Activated T-helper 2 cell treated with anti-CD3 and anti-CD28 coated beads, Interferon-gamma antibody, Interleukin-2, Interleukin-4, amounts not matched to agents 10 μg/mL and 5 μg/mL and 100 μg/mL, durations not matched to agents 14 hours and 24 hours and 36 hours (primary cell): ENCODE measurements at regions of chr4 and their contacts with region 1.

Region 1: DNA sequence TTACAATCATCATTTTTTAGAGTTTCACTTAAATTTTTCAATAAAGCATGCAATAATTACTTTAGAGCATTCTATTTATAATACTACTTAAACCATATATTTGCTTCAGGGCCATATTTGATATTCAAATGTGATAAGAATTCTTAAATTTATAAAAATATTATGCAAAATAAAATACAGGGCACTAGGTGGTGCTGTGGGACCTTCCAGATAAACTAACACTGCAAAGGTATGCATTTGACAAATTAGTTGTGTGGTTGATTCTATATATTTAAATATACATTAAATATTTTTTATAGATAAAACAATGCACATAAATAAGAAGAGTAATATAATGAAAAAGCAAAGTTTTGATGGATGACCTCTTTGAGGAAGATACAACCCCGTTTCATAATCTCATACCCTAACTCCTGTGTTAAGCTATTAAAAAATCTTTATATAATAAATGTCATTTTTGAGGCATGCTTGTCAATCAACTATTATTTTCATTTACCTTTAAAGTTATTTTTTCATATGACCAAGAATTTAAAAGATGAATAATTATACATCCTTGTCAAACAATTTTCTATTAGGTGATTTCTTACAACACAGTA is 128.4 kb downstream of the REELD1 start:
- DNase-seq: no peak
- H3K4me3 Mint-ChIP-seq: no peak overlapping the region
- H3K27ac Mint-ChIP-seq: no peak overlapping the region
- H3K4me1 Mint-ChIP-seq: peaks cover 7% of the 10 kb centered on the region
- H3K27me3 Mint-ChIP-seq: no peaks in the 10 kb centered on the region

Region 2: GRCh38 chr4:146458594-146458993 is 115.9 kb after region 1 on chr4:
- intact Hi-C with region 1: loop called (anchors 2 kb)
- DNase-seq: no peak
- H3K4me3 Mint-ChIP-seq: peak overlapping the region; percentile 65
- H3K27ac Mint-ChIP-seq: peak overlapping the region; percentile 86
- H3K4me1 Mint-ChIP-seq: peaks cover 29% of the 10 kb centered on the region
- H3K27me3 Mint-ChIP-seq: no peaks in the 10 kb centered on the region

Region 3: DNA sequence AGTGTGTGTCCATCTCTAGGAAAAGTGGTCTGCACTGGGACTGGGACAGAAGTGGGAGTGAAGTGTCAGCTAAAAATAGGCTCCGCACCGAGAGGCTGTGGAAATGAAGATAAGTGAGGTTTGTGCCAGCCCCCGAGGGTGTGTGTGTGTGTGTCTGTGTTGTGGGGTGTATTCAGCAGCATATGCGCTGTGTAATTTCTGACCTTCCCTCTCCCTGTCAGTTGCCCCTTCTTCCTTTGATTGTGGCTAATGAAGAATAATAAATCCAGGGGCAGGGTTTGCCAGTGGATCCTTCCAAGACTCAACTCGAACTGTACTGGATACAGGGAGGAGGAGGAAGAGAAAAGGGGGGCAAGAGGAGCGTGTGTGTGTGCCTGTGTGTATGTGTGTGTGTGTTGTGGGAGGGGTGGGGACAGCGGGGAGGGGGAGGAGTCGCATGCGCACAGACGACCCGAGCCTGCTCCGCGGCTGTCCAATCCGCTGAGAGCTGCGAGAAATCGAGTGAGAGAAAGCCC is 295.0 kb after region 1 on chr4:
- intact Hi-C with region 1: loop called (anchors 2 kb)
- DNase-seq: no peak
- H3K4me3 Mint-ChIP-seq: no peak overlapping the region
- H3K27ac Mint-ChIP-seq: no peak overlapping the region
- H3K4me1 Mint-ChIP-seq: no peaks in the 10 kb centered on the region
- H3K27me3 Mint-ChIP-seq: peaks cover 86% of the 10 kb centered on the region

Region 4: GRCh38 chr4:146916479-146917076 is 573.9 kb after region 1 on chr4:
- intact Hi-C with region 1: loop called (anchors 1 kb)
- DNase-seq: no peak
- H3K4me3 Mint-ChIP-seq: no peak overlapping the region
- H3K27ac Mint-ChIP-seq: no peak overlapping the region
- H3K4me1 Mint-ChIP-seq: no peaks in the 10 kb centered on the region
- H3K27me3 Mint-ChIP-seq: peaks cover 9% of the 10 kb centered on the region

Region 5: DNA sequence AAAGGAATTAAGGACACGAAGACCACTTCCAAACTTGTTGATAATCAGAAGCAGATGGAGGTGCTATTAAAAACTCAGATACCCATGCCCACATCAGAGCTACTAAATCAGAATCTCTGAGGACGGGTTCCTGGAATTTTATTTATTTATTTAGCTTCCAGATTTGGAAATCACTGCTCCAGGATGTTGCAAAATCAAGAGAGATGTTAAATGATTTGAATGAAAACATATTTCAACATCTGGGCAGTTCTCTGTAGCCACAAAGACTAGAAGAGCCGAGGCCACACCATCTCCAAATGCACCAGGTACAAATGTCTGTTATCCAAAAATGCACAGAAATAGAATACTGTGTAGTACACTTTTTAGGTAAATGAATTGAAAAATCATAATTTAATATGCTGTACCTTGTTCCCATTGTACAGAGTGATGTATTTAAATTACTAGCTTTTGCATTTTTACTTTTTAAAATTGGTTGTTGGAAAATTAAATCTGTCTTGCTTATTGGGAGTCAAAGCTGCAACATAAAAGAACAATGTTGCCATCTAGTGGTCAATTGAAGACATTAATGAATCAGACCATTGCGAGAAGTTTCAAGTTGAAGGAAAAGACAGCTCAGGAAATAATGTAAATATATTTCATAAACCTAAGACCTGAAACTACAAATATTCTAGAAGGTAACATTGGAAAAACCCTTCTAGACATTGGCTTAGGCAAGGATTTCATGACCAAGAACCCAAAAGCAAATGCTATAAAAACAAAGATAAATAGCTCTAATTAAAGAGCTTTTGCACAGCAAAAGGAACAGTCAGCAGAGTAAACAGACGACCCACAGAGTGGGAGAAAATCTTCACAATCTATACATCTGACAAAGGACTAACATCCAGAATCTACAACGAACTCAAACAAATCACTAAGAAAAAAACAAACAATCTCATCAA is 754.2 kb after region 1 on chr4:
- intact Hi-C with region 1: loop called (anchors 2 kb)
- DNase-seq: no peak
- H3K4me3 Mint-ChIP-seq: no peak overlapping the region
- H3K27ac Mint-ChIP-seq: no peak overlapping the region
- H3K4me1 Mint-ChIP-seq: no peaks in the 10 kb centered on the region
- H3K27me3 Mint-ChIP-seq: no peaks in the 10 kb centered on the region